ENCODE measurements at regions of chr16 and their contacts with region 1.

Region 1: GRCh38 chr16:30445408-30446202 is at the start of gene SEPHS2:
- DNase-seq: peak; percentile 93
- H3K4me3 Mint-ChIP-seq: peak within 1 kb of the TSS; percentile 95
- H3K27ac Mint-ChIP-seq: peak within 1 kb of the TSS; percentile 97
- H3K4me1 Mint-ChIP-seq: peaks cover 42% of the 10 kb centered on the region
- H3K27me3 Mint-ChIP-seq: no peaks in the 10 kb centered on the region
- total RNA-seq, gene SEPHS2: 83.4 and 87.2 TPM in 2 replicates

Region 2: DNA sequence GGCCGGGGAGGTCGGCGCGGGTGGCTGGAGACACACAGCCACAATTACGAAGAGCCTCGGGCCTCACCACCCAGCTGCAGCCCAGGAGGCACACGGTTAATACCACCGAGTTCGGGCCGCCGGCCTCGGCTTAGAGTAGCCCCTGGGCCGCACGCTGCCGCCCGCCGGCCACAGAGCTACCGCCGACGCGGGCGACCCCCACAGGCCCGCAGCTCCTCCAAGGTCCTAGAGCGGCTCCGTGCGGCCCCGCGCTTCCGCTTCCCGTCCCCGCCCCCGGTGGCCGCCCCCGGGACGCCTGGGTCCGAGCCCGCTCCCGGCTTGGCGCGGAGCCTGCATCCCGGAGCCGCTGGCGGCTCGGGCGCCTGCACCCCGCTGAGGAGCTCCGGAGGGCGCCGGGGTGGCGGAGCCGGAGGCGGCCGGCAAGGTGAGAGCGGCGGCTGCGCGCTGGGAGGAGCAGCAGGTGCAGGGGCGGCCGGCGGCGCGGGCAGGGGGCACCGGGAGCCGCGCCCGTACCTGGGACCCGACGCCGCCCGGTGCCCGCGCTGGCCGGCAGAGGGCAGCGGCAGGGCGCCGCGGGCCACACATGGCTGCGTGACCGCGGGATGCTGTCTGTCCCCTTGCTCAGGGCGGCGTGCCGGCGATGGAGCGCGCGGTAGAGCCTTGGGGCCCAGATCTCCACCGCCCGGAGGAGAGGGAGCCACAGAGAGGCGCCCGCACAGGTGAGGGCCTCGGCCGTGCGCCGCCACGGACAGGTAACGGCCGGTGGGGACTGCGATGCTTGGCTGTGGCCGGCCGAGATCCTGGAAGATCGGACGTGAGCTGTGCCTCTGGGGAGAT is 50.2 kb before region 1 on chr16 and contains the start of gene ZNF48:
- intact Hi-C with region 1: no loop called
- DNase-seq: peak; percentile 53
- H3K4me3 Mint-ChIP-seq: peak within 1 kb of the TSS; percentile 90
- H3K27ac Mint-ChIP-seq: peak within 1 kb of the TSS; percentile 80
- H3K4me1 Mint-ChIP-seq: peaks cover 41% of the 10 kb centered on the region
- H3K27me3 Mint-ChIP-seq: no peaks in the 10 kb centered on the region
- total RNA-seq, gene ZNF48: 20.2 and 21.4 TPM in 2 replicates

Region 3: GRCh38 chr16:30458561-30459394 is 13.2 kb after region 1 on chr16:
- intact Hi-C with region 1: loop called (anchors 1 kb)
- DNase-seq: peak; percentile 88
- H3K4me3 Mint-ChIP-seq: peak overlapping the region; percentile 64
- H3K27ac Mint-ChIP-seq: peak overlapping the region; percentile 95
- H3K4me1 Mint-ChIP-seq: peaks cover 77% of the 10 kb centered on the region
- H3K27me3 Mint-ChIP-seq: no peaks in the 10 kb centered on the region

Region 4: GRCh38 chr16:30472328-30472942 is 26.8 kb after region 1 on chr16 and contains the start of gene ITGAL:
- intact Hi-C with region 1: loop called (anchors 1 kb)
- DNase-seq: peak; percentile 81
- H3K4me3 Mint-ChIP-seq: peak within 1 kb of the TSS; percentile 96
- H3K27ac Mint-ChIP-seq: peak within 1 kb of the TSS; percentile 95
- H3K4me1 Mint-ChIP-seq: peaks cover 60% of the 10 kb centered on the region
- H3K27me3 Mint-ChIP-seq: no peaks in the 10 kb centered on the region
- total RNA-seq, gene ITGAL: 259 and 287 TPM in 2 replicates

Region 5: DNA sequence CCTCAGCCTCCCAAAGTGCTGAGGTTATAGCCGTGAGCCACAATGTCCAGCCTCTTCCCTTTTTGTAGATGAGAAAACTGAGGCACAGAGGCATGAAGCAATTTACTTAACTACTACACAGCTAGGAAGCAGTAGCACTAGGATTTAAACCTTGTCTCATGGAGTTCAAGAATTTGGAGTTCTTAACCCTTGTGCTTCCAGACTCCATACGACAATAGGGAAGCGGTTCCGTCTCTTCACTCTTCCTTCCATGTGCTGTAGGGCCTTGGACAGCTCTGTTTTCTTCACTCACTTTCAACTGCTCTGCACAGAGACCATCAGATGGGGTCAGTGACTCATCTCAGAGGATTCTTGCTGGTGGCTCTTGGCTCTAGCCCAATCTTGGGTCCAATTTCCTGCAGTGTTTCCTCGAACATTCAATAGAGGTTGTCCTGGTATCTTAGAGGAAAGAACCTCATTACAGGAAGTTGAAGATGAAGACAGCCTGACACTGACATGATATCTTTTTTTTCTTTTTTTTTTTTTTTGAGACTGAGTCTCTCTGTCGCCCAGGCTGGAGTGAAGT is 46.2 kb after region 1 on chr16:
- intact Hi-C with region 1: loop called (anchors 5 kb)
- DNase-seq: no peak
- H3K4me3 Mint-ChIP-seq: no peak overlapping the region
- H3K27ac Mint-ChIP-seq: peak overlapping the region; percentile 85
- H3K4me1 Mint-ChIP-seq: peaks cover 31% of the 10 kb centered on the region
- H3K27me3 Mint-ChIP-seq: no peaks in the 10 kb centered on the region

Region 6: GRCh38 chr16:30602616-30603277 is 157.1 kb after region 1 on chr16:
- intact Hi-C with region 1: loop called (anchors 1 kb)
- DNase-seq: no peak
- H3K4me3 Mint-ChIP-seq: no peak overlapping the region
- H3K27ac Mint-ChIP-seq: peak overlapping the region; percentile 40
- H3K4me1 Mint-ChIP-seq: peaks cover 12% of the 10 kb centered on the region
- H3K27me3 Mint-ChIP-seq: no peaks in the 10 kb centered on the region